ENCODE measurements at regions of chr7 and their contacts with region 1.

Region 1: GRCh38 chr7:100563809-100564400 is 9.8 kb downstream of the SAP25 start:
- DNase-seq: peak; percentile 89
- H3K4me3 ChIP-seq: no peak overlapping the region
- H3K27ac ChIP-seq: no peak overlapping the region
- H3K4me1 ChIP-seq: peaks cover 0 to 5% (median 0%) of the 10 kb centered on the region in 4 donors
- H3K27me3 ChIP-seq: no peaks in the 10 kb centered on the region
- CTCF ChIP-seq: peak; percentile 84 to 98 (median 93)
- EP300 ChIP-seq: no peak
- POLR2A ChIP-seq: no peak

Region 2: GRCh38 chr7:100469227-100470044 is 94.5 kb before region 1 on chr7:
- intact Hi-C with region 1: loop called (anchors 2 kb)
- DNase-seq: peak; percentile 94
- H3K4me3 ChIP-seq: no peak overlapping the region
- H3K27ac ChIP-seq: peak overlapping the region; percentile 38 to 77 (median 60)
- H3K4me1 ChIP-seq: peaks cover 0 to 83% (median 69%) of the 10 kb centered on the region in 4 donors
- H3K27me3 ChIP-seq: no peaks in the 10 kb centered on the region
- CTCF ChIP-seq: peak; percentile 87 to 98 (median 95)
- EP300 ChIP-seq: no peak
- POLR2A ChIP-seq: no peak

Region 3: DNA sequence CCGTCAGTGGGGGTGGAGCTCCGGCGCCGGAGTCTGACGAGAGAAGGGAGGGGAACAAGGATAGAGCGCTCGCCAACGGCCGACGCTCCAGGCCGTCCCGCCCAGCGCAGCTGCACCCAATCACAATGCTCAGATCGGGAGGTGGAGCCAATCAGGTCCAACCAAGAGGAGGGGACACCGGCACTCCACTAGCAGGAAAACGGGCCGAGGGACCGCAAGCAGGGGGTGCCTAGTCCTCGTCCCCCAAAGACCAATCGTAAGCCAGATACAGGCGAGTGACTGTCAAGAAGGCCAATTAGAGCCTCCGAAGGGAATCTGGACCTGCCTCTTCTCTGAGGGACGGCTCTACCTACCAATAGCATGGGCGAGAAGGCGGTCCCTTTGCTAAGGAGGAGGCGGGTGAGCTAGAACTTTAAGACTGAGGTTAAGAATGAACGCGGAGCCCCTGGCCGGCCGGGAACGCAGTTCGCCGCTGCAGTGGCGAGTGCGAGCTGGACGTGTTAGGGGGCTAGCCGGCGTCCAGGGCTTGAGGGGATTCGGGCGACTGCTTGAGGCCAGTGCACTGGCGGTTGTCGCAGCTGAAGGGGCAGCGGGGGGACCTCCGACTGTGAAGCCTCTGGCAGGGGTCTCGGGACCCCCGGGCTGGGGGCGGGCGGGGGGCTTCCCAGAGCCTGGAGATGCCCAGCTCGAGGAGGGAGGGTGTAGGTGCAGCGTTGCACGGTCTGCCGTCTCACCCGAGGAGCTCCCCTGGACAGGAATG is 22.5 kb after region 1 on chr7 and contains the start of gene FBXO24:
- intact Hi-C with region 1: no loop called
- DNase-seq: peak; percentile 100
- H3K4me3 ChIP-seq: peak within 1 kb of the TSS; percentile 90 to 99 (median 94)
- H3K27ac ChIP-seq: peak within 1 kb of the TSS; percentile 91 to 96 (median 94)
- H3K4me1 ChIP-seq: peaks cover 0 to 44% (median 35%) of the 10 kb centered on the region in 4 donors
- H3K27me3 ChIP-seq: peaks cover 0 to 11% (median 0%) of the 10 kb centered on the region in 3 donors
- CTCF ChIP-seq: no peak
- EP300 ChIP-seq: no peak
- POLR2A ChIP-seq: peak; percentile 17 to 31
- total RNA-seq, gene FBXO24: 0.27 to 2.8 (median 0.71) TPM in 3 of 4 donors, not detected in the other

Region 4: DNA sequence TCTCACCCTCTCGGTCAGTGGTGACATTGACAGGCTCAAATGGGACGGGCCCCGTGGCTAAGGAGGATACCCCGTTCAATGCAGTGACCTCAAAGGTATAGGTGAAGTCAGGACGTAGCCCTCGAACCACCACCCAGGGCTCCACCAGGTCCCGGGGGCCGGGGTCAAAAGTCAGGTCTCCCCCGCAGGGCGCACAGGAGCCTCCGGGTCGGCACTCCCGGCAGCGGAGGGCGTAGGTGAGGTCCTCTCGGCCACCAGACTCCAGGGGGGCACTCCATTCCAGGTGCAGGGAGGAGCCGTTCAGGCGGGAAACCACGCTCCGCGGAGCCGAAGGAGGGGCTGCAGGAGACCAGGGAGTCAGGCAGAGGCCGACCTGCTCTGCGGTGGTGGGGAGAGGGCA is 255.6 kb after region 1 on chr7:
- intact Hi-C with region 1: no loop called
- DNase-seq: no peak
- H3K4me3 ChIP-seq: no peak overlapping the region
- H3K27ac ChIP-seq: no peak overlapping the region
- H3K4me1 ChIP-seq: peaks cover 0 to 12% (median 5%) of the 10 kb centered on the region in 4 donors
- H3K27me3 ChIP-seq: no peaks in the 10 kb centered on the region
- CTCF ChIP-seq: no peak
- EP300 ChIP-seq: no peak
- POLR2A ChIP-seq: no peak